Ascending aorta (tissue), 2 donors: ENCODE measurements at regions of chr19 and their contacts with region 1.

Region 1: DNA sequence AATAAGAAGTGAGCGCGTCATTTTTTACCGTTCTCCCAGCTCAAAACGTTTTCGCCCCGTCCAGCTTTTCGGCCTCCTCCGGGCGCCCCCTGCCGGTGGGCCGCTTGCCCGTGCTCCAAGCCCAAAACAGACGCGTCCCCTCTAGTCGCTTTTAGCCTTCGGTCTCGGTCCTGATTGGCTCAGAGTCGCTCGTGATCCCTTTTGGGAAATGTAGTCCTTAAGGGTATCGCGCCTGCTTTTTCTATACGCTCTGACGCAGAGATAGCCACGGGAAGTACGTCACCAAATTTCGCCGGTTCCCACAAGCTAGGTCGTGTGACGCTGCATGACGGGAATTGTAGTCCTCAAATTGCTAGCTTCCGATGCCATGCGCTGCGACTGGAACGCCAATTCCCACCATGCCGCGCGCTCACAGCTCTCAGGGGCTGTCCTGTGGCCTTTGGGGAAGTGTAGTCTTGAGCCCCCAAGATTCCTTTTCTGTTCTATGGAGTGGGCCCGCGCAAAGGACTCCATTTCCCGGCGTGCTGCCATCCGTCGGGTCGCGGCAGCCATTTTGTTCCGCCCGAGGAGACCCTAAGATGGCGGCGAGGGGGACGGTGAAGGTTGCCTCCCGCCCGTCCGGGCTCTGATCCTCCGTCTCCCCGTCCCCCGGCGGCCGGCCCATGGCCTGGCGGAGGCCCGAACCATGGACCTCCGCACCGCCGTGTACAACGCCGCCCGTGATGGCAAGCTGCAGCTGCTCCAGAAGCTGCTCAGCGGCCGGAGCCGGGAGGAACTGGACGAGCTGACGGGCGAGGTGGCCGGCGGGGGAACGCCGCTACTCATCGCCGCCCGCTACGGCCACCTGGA is at the start of gene FEM1A:
- DNase-seq: peak; percentile 100
- H3K4me3 ChIP-seq: peak within 1 kb of the TSS; percentile 72 to 86
- H3K27ac ChIP-seq: peak within 1 kb of the TSS; percentile 86 to 89
- H3K4me1 ChIP-seq: peaks cover 12 to 19% of the 10 kb centered on the region in 2 donors
- H3K27me3 ChIP-seq: no peaks in the 10 kb centered on the region
- CTCF ChIP-seq: peak; percentile 96 to 98 (median 98)
- total RNA-seq, gene FEM1A: 20.2 TPM

Region 2: DNA sequence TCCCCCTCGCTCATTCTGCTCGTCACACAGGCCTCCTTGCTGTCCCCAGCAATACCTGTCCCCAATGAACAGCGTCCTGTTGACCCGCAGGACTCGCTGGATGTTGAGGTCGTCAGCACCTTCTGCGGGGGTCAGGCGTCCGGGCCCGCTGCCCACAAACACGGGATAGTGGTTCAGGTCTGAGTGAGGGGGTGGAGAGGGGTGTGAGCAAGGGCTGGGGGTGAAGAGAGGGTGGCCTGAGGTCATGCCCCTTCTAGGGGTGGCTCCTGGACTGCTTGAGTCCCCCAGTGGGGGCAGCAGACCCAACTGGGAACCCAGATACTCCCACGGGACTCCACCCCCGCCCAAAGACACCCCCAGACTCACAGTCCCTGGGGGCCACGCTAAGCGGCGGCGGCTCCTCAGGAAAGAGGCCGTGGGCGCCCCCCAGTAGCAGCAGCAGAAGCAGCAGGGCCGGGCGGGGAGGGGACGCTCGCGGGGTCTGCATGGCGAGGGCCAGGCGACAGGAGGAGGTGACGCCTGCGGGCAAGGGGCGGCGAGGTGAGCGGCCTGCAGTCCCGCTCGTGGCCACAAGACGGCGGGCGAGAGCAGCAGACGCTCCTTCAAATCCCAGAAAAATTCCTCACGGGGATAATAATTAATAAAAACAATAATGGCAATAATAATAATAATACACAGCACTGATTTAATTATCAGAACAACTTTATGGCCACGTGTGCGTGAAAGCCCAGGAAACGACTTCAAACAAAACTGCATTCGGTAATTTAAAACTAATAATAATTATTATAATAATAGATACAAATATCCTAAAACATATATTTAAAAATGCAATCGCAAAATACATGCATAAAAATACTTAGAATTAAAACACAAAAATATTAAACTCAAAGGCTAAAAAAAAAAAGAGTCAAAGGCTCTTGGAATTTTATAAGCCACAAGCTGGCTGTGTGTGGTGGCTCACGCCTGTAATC is 233.1 kb before region 1 on chr19:
- intact Hi-C with region 1: loop called (anchors 2 kb)
- DNase-seq: no peak
- H3K4me3 ChIP-seq: peak overlapping the region; percentile 6 to 45
- H3K27ac ChIP-seq: no peak overlapping the region
- H3K4me1 ChIP-seq: no peaks in the 10 kb centered on the region
- H3K27me3 ChIP-seq: no peaks in the 10 kb centered on the region
- CTCF ChIP-seq: peak; percentile 91 to 100 (median 100)

Region 3: GRCh38 chr19:4669723-4670480 is 121.5 kb before region 1 on chr19 and contains the start of gene MYDGF:
- intact Hi-C with region 1: loop called (anchors 1 kb)
- DNase-seq: peak; percentile 50 to 94
- H3K4me3 ChIP-seq: peak within 1 kb of the TSS; percentile 86 to 94
- H3K27ac ChIP-seq: peak within 1 kb of the TSS; percentile 71 to 83
- H3K4me1 ChIP-seq: peaks cover 0 to 13% of the 10 kb centered on the region in 2 donors
- H3K27me3 ChIP-seq: no peaks in the 10 kb centered on the region
- CTCF ChIP-seq: no peak
- total RNA-seq, gene MYDGF: 49.0 TPM

Region 4: DNA sequence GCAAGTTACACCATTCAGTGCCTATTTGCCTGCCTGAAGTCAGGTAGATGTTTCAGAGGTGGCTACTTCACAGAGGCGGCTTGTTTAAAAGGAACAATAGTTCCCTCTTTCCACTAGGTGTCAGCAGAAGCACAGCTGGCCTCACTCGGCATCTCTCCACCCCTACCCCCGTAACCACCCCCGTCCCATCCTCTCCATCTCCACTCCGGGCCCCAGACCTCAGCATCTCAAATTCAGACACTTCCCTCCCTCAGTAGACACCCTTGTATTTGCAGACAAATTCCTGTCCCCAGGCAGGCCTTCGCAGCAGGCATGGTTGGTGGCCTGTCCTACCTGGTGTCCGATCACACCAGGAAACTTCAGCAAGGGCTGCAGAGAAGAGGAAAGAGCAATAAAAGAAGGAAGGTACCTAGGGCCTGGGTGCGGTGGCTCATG is 58.7 kb before region 1 on chr19:
- intact Hi-C with region 1: loop called (anchors 1 kb)
- DNase-seq: no peak
- H3K4me3 ChIP-seq: no peak overlapping the region
- H3K27ac ChIP-seq: no peak overlapping the region
- H3K4me1 ChIP-seq: no peaks in the 10 kb centered on the region
- H3K27me3 ChIP-seq: no peaks in the 10 kb centered on the region
- CTCF ChIP-seq: peak; percentile 53 to 76 (median 56)

Region 5: DNA sequence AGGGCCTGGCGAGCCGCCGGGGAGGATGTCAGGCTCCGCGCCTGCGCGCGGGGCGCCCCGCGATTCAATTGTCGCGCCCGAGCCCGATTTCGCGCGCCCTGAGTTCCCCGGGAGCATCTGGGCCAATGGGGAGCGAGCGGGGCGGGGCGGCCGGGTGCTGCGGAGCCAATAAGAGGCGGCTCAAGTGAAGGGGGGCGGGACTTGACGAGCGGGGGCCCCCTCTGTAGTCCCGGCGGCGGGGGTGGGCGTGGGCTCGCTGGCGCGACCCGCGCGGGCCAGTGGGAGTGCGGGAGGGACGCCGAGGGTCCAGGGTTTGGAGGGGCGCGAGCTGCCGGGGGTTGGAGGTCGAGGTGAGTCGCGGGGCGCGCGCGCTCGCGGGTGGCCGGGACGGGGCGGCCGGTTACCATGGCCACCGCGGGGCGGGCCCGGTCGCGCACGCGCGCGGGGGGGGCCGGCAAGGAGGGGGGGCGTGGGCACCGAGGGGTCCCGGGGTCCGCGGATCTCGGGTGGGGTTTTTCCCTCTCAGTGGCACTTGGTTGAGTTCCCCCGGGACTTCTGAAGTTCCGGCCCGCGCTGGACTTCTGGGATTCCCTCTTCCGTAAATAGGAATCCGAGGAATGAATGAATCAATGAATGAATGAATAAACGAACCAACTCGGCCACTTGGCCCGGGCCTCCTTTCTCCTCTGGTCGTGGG is 118.7 kb after region 1 on chr19:
- intact Hi-C with region 1: loop called (anchors 5 kb)
- DNase-seq: peak; percentile 71 to 94
- H3K4me3 ChIP-seq: peak overlapping the region; percentile 76 to 77
- H3K27ac ChIP-seq: no peak overlapping the region
- H3K4me1 ChIP-seq: peaks cover 18 to 22% of the 10 kb centered on the region in 2 donors
- H3K27me3 ChIP-seq: no peaks in the 10 kb centered on the region
- CTCF ChIP-seq: no peak

Region 6: DNA sequence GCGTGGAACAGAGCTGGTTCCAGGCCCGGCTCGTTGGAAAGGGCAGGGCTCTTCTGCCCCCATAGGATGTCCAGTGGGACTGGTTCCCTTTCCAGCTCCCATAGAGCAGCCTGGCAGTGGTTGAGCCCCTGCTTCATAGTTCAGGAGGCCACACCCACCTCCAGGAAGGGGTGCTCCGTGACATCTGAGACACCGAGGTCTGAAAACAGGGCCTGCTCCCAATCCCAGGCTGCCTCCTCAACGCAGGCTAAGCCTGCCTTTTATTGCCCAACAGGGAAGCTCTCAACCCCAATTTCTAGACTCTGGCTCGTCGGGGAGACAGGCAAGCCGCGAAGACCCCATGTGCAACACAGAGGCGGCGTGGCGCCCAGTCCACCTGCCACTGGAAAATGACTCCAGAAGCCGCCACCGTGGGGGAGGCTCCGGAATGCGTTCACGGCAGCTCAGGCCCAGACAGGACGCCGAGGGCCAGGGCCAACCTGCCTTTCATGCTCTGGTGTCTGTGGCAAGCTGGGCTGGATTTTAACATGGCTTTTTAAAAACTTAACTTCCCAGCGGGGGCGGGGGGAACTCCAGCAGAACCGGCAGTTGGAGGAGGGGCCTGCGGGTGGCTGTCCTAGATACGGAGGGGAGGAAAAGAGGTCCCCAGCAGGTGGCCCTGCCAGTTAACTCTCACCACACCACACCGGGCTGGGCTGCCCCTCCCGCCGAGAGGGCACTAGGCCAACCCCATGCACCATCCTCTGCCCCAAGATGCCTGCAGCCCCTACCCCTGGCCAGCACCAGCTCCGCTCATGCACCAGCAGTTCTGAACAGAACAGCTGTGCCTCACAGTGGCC is 794.3 kb after region 1 on chr19:
- intact Hi-C with region 1: no loop called
- DNase-seq: no peak
- H3K4me3 ChIP-seq: no peak overlapping the region
- H3K27ac ChIP-seq: peak overlapping the region; percentile 40 to 49
- H3K4me1 ChIP-seq: peaks cover 0 to 12% of the 10 kb centered on the region in 2 donors
- H3K27me3 ChIP-seq: no peaks in the 10 kb centered on the region
- CTCF ChIP-seq: peak in 1 of 3 experiments; percentile 3